Activated T-helper 1 cell treated with anti-CD3 and anti-CD28 coated beads, Interleukin-12 subunit alpha, Interleukin-12 subunit beta, Interleukin-2, Interleukin-4 antibody, amounts not matched to agents 30 ng/mL and 10 ng/mL and 1 ng/mL, durations not matched to agents 14 hours and 24 hours and 36 hours (primary cell): ENCODE measurements at regions of chr18 and their contacts with region 1.

Region 1: DNA sequence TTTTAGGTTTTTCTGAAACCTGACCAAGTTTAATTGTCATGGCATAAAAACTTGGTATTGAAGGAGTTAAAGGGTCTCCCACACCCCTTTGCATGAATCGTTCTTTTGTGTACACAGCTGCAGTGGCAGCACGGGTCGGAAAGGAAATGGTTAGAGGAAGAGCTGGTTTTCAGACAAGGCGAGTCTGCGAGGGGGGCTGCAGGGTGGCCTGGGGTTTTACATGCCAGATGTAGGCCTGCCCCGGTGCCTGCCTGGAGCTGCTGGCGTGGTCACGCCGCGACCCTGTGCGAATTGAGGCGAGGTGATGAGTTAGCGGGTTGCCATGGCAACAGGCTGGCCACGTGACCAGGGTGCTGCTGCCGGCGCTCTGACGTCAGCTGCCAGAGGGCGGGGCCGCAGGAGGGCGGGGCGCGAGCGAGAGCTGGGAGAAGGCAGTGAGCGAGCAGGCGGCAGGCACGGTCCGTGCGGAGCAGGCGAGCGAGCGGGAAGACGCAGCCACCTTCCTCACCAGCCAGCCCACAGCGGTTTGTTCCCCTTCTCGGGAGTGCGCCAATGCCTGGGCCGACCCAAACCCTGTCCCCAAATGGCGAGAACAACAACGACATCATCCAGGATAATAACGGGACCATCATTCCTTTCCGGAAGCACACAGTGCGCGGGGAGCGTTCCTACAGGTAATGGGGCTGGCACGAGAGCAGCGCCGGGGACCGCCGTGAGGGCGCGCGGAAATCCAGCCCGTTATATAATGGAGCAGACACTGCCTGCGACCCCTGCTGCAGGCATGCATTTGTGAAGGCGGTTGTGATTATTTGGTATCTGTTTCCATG is at the start of gene MAPRE2:
- DNase-seq: peak; percentile 98
- H3K4me3 Mint-ChIP-seq: peak within 1 kb of the TSS; percentile 96
- H3K27ac Mint-ChIP-seq: peak within 1 kb of the TSS; percentile 99
- H3K4me1 Mint-ChIP-seq: peaks cover 57% of the 10 kb centered on the region
- H3K27me3 Mint-ChIP-seq: no peaks in the 10 kb centered on the region
- total RNA-seq, gene MAPRE2: 50.7 TPM in 2 replicates

Region 2: GRCh38 chr18:34818064-34818463 is 223.1 kb before region 1 on chr18:
- intact Hi-C with region 1: no loop called
- DNase-seq: no peak
- H3K4me3 Mint-ChIP-seq: no peak overlapping the region
- H3K27ac Mint-ChIP-seq: no peak overlapping the region
- H3K4me1 Mint-ChIP-seq: no peaks in the 10 kb centered on the region
- H3K27me3 Mint-ChIP-seq: peaks cover 7% of the 10 kb centered on the region

Region 3: GRCh38 chr18:34857320-34857719 is 183.9 kb before region 1 on chr18:
- intact Hi-C with region 1: loop called (anchors 1 kb)
- DNase-seq: no peak
- H3K4me3 Mint-ChIP-seq: no peak overlapping the region
- H3K27ac Mint-ChIP-seq: no peak overlapping the region
- H3K4me1 Mint-ChIP-seq: peaks cover 7% of the 10 kb centered on the region
- H3K27me3 Mint-ChIP-seq: peaks cover 43% of the 10 kb centered on the region

Region 4: DNA sequence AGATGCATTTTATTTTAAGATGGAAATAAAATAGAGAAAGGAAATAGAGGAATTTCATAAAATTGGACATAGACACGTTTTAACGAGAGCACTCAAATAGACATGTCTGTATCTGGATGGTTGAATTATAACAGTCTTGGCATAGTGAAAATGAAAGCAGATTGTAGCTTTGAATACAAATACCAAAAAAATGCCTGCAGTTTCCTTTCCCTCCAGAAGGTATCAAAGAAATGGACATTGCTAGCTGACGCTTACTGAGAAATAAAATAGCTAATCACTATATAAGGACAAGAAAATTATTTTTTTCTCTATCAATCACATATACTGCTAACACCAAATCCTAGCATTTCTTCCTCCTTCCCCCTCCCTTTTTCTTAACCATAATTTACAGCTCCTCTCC is 11.4 kb before region 1 on chr18:
- intact Hi-C with region 1: loop called (anchors 1 kb)
- DNase-seq: no peak
- H3K4me3 Mint-ChIP-seq: peak overlapping the region; percentile 77
- H3K27ac Mint-ChIP-seq: peak overlapping the region; percentile 95
- H3K4me1 Mint-ChIP-seq: peaks cover 42% of the 10 kb centered on the region
- H3K27me3 Mint-ChIP-seq: no peaks in the 10 kb centered on the region

Region 5: DNA sequence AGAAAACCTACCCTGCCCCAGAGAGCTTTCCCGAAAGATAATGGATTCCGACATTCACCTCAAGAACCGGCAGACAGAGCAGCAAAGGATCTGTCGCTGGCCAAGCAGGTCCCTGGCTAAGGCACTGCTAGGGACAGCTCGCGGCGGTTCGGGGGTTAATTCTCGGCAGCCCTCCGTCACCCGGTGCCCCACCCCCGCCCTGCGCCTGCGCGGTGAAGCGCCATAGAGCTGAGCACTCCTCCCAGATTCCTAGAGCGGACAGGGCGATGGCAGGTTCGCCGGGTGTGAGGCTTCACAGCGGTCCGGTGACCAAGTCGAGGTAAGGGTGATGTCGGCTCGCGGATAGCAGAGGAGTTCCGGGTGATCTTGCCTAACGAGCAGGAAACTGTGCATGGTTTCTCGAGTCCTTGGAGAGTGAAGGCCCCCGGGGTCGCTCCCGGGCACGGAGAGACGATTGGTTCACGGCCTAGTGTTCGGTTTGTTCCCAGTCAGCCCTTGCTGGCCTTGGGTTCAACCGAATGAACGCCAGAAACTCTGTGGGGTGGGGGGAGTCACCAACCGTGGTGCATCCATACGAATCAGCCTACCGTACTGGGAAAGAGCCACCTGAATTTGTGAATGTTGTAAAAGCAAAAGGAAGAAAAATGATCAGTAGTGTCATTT is 249.0 kb after region 1 on chr18 and contains the start of gene ZSCAN30:
- intact Hi-C with region 1: loop called (anchors 2 kb)
- DNase-seq: peak; percentile 94
- H3K4me3 Mint-ChIP-seq: peak within 1 kb of the TSS; percentile 100
- H3K27ac Mint-ChIP-seq: peak within 1 kb of the TSS; percentile 99
- H3K4me1 Mint-ChIP-seq: peaks cover 49% of the 10 kb centered on the region
- H3K27me3 Mint-ChIP-seq: no peaks in the 10 kb centered on the region
- total RNA-seq, gene ZSCAN30: 10.2 and 11.0 TPM in 2 replicates

Region 6: GRCh38 chr18:35324926-35325655 is 283.9 kb after region 1 on chr18:
- intact Hi-C with region 1: no loop called
- DNase-seq: no peak
- H3K4me3 Mint-ChIP-seq: no peak overlapping the region
- H3K27ac Mint-ChIP-seq: no peak overlapping the region
- H3K4me1 Mint-ChIP-seq: no peaks in the 10 kb centered on the region
- H3K27me3 Mint-ChIP-seq: peaks cover 2% of the 10 kb centered on the region

Region 7: GRCh38 chr18:35616664-35617423 is 575.6 kb after region 1 on chr18:
- intact Hi-C with region 1: loop called (anchors 5 kb)
- DNase-seq: peak; percentile 45
- H3K4me3 Mint-ChIP-seq: no peak overlapping the region
- H3K27ac Mint-ChIP-seq: no peak overlapping the region
- H3K4me1 Mint-ChIP-seq: peaks cover 19% of the 10 kb centered on the region
- H3K27me3 Mint-ChIP-seq: no peaks in the 10 kb centered on the region

Region 8: DNA sequence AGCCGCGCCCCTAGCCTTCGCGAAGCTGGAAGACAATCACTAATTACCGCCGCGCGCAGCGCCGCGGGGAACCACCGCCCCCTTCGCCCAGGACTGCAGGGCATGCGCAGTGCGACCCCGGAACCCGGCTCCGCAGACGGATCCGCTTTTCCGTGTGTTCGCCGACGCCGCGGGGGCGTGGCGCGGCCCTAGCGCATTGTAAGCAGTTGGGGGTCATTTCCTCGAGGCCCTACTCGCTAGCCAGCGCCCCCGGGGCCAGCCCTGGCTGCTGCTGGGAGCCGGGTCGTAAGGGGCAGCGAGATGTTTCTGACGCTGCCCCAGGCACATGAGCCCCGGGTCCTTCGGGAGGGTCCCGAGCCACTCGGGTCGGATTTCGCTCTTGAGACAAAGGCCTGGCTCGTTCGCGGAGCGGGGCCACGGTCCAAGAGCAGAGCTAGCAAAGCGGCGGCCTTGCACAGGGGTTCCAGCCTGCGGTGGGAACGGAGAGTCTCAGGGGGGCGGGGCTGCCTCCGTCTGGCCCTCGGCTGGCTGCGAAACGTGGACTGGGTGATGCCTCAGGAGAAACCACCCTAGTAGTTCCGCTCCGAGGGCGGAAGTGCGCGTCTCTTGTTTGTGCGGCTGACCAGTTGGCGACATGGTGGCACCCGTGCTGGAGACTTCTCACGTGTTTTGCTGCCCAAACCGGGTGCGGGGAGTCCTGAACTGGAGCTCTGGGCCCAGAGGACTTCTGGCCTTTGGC is 1088.3 kb after region 1 on chr18 and contains the starts of genes ELP2 and SLC39A6:
- intact Hi-C with region 1: loop called (anchors 1 kb)
- DNase-seq: peak; percentile 93
- H3K4me3 Mint-ChIP-seq: peak within 1 kb of the TSS; percentile 89
- H3K27ac Mint-ChIP-seq: peak within 1 kb of the TSS; percentile 91
- H3K4me1 Mint-ChIP-seq: peaks cover 53% of the 10 kb centered on the region
- H3K27me3 Mint-ChIP-seq: no peaks in the 10 kb centered on the region
- total RNA-seq, gene ELP2: 97.1 and 104 TPM in 2 replicates
- total RNA-seq, gene SLC39A6: 53.5 and 54.4 TPM in 2 replicates